Astrocyte of the cerebellum (primary cell): ENCODE measurements at regions of chr18 and their contacts with region 1.

Region 1: GRCh38 chr18:60554967-60555366 is 182.4 kb upstream of the MC4R start:
- DNase-seq: no peak
- H3K4me3 ChIP-seq: no peak overlapping the region
- CTCF ChIP-seq: no peak

Region 2: GRCh38 chr18:59446012-59446411 is 1109.0 kb before region 1 on chr18:
- in situ Hi-C with region 1: loop called (anchors 25 kb)
- DNase-seq: peak; percentile 27
- H3K4me3 ChIP-seq: no peak overlapping the region
- CTCF ChIP-seq: no peak

Region 3: GRCh38 chr18:59988098-59988706 is 566.8 kb before region 1 on chr18:
- in situ Hi-C with region 1: loop called (anchors 25 kb)
- DNase-seq: peak; percentile 64
- H3K4me3 ChIP-seq: no peak overlapping the region
- CTCF ChIP-seq: peak; percentile 90

Region 4: DNA sequence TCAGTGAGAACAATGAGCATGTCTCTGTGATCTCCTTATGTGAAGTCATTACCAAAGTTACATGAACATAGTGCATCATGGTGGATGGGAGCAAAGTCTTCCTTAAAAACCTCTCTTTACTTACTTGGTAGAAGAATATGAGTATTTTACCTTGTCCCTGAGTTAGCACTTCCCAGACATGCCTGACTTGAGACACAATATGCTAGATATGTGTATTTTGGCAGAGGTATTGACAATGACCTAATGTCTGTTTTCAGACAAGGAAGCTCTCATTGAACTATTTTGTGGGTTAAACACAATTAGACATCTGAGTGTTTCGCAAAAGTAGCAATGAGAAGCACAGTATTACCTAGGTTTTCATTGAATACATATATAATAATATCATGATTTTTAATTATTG is 83.3 kb before region 1 on chr18:
- in situ Hi-C with region 1: no loop called
- DNase-seq: peak; percentile 49
- H3K4me3 ChIP-seq: no peak overlapping the region
- CTCF ChIP-seq: no peak